Activated B cell treated with CpG ODN at 0.5 μM for 24 hours (primary cell): ENCODE measurements at regions of chr4 and their contacts with region 1.

Region 1: GRCh38 chr4:139030614-139031235 is 15.1 kb downstream of the NOCT start:
- DNase-seq: peak; percentile 34
- ATAC-seq: peak; percentile 75
- H3K4me3 Mint-ChIP-seq: peak overlapping the region; percentile 0
- H3K27ac Mint-ChIP-seq: no peak overlapping the region
- H3K4me1 Mint-ChIP-seq: peaks cover 32% of the 10 kb centered on the region
- H3K27me3 Mint-ChIP-seq: no peaks in the 10 kb centered on the region
- CTCF ChIP-seq: peak; percentile 60

Region 2: GRCh38 chr4:139042981-139043460 is 12.3 kb after region 1 on chr4:
- CTCF ChIA-PET with region 1: interaction called, 12 read pairs
- POLR2A ChIA-PET with region 1: no interaction called
- intact Hi-C with region 1: no loop called
- DNase-seq: no peak
- ATAC-seq: no peak
- H3K4me3 Mint-ChIP-seq: no peak overlapping the region
- H3K27ac Mint-ChIP-seq: no peak overlapping the region
- H3K4me1 Mint-ChIP-seq: no peaks in the 10 kb centered on the region
- H3K27me3 Mint-ChIP-seq: no peaks in the 10 kb centered on the region
- CTCF ChIP-seq: no peak

Region 3: GRCh38 chr4:139099366-139099982 is 68.7 kb after region 1 on chr4:
- CTCF ChIA-PET with region 1: interaction called, 3 read pairs
- POLR2A ChIA-PET with region 1: no interaction called
- intact Hi-C with region 1: loop called (anchors 1 kb)
- DNase-seq: peak; percentile 28
- ATAC-seq: peak; percentile 90
- H3K4me3 Mint-ChIP-seq: no peak overlapping the region
- H3K27ac Mint-ChIP-seq: no peak overlapping the region
- H3K4me1 Mint-ChIP-seq: no peaks in the 10 kb centered on the region
- H3K27me3 Mint-ChIP-seq: no peaks in the 10 kb centered on the region
- CTCF ChIP-seq: no peak

Region 4: GRCh38 chr4:139416073-139416673 is 385.4 kb after region 1 on chr4:
- CTCF ChIA-PET with region 1: interaction called, 4 read pairs
- POLR2A ChIA-PET with region 1: no interaction called
- intact Hi-C with region 1: loop called (anchors 1 kb)
- DNase-seq: no peak
- ATAC-seq: no peak
- H3K4me3 Mint-ChIP-seq: no peak overlapping the region
- H3K27ac Mint-ChIP-seq: no peak overlapping the region
- H3K4me1 Mint-ChIP-seq: peaks cover 19% of the 10 kb centered on the region
- H3K27me3 Mint-ChIP-seq: no peaks in the 10 kb centered on the region
- CTCF ChIP-seq: peak; percentile 99